ENCODE measurements at regions of chr4 and their contacts with region 1.

Region 1: GRCh38 chr4:25330905-25331808 is 18.6 kb downstream of the ZCCHC4 start:
- DNase-seq: no peak
- H3K4me3 Mint-ChIP-seq: peak overlapping the region; percentile 79
- H3K27ac Mint-ChIP-seq: peak overlapping the region; percentile 92
- H3K4me1 Mint-ChIP-seq: peaks cover 19% of the 10 kb centered on the region
- H3K27me3 Mint-ChIP-seq: no peaks in the 10 kb centered on the region

Region 2: DNA sequence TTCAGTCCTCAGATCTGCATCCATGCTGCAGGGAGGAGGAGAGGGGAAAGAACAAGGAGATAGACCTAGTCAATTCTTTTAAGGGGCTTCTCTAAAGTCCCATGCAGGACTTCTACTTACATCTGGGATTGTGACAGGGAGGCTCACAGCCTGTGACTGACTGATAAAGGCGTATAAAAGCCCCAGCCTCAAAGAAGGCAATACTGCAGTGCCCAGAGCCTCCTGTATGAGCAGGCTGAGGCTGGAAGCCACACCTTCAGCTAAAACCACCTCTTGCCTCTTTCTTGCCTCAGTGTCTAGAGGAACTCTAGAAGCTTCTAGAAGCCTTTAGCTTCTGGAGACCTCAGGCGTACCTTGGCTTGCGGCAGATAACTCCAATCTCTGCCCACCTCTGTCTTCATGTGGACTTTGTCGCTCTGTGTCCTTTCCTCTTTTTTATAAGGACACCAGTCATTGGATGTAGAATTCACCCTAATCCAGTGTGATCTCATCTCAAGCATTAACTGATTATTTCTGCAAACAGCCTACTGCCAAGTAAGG is 24.6 kb before region 1 on chr4:
- intact Hi-C with region 1: no loop called
- DNase-seq: no peak
- H3K4me3 Mint-ChIP-seq: no peak overlapping the region
- H3K27ac Mint-ChIP-seq: no peak overlapping the region
- H3K4me1 Mint-ChIP-seq: peaks cover 14% of the 10 kb centered on the region
- H3K27me3 Mint-ChIP-seq: peaks cover 5% of the 10 kb centered on the region

Region 3: DNA sequence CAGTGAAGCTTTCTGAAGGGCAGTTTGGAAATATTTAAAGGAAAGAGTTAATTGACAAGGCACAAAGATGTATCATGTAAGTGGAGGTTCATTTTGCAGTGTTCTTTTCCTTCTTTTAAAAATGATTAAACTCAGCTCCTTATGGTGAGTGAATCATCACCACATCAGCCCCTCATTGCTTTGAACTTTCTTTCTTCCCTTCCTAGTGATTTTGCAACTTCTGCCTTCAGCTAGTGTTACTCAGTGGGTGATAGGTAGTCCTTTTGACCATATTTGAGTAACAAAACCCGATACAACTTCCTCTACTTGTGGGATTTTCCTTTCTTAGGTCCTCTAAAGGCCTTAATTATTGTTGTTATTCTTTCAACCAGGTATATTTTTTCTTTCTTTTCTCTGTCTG is 10.4 kb before region 1 on chr4:
- intact Hi-C with region 1: loop called (anchors 1 kb)
- DNase-seq: no peak
- H3K4me3 Mint-ChIP-seq: peak overlapping the region; percentile 2
- H3K27ac Mint-ChIP-seq: peak overlapping the region; percentile 76
- H3K4me1 Mint-ChIP-seq: peaks cover 24% of the 10 kb centered on the region
- H3K27me3 Mint-ChIP-seq: no peaks in the 10 kb centered on the region

Region 4: GRCh38 chr4:25376754-25377571 is 45.8 kb after region 1 on chr4 and contains the start of gene ANAPC4:
- intact Hi-C with region 1: loop called (anchors 5 kb)
- DNase-seq: peak; percentile 95
- H3K4me3 Mint-ChIP-seq: no peak within 1 kb of the TSS
- H3K27ac Mint-ChIP-seq: peak within 1 kb of the TSS; percentile 91
- H3K4me1 Mint-ChIP-seq: no peaks in the 10 kb centered on the region
- H3K27me3 Mint-ChIP-seq: no peaks in the 10 kb centered on the region
- total RNA-seq, gene ANAPC4: 36.0 and 39.9 TPM in 2 replicates

Region 5: GRCh38 chr4:26088433-26088928 is 757.3 kb after region 1 on chr4:
- intact Hi-C with region 1: no loop called
- DNase-seq: peak; percentile 34
- H3K4me3 Mint-ChIP-seq: peak overlapping the region; percentile 71
- H3K27ac Mint-ChIP-seq: peak overlapping the region; percentile 94
- H3K4me1 Mint-ChIP-seq: peaks cover 68% of the 10 kb centered on the region
- H3K27me3 Mint-ChIP-seq: no peaks in the 10 kb centered on the region